Mammary epithelial cell (primary cell): ENCODE measurements at regions of chr6 and their contacts with region 1.

Region 1: DNA sequence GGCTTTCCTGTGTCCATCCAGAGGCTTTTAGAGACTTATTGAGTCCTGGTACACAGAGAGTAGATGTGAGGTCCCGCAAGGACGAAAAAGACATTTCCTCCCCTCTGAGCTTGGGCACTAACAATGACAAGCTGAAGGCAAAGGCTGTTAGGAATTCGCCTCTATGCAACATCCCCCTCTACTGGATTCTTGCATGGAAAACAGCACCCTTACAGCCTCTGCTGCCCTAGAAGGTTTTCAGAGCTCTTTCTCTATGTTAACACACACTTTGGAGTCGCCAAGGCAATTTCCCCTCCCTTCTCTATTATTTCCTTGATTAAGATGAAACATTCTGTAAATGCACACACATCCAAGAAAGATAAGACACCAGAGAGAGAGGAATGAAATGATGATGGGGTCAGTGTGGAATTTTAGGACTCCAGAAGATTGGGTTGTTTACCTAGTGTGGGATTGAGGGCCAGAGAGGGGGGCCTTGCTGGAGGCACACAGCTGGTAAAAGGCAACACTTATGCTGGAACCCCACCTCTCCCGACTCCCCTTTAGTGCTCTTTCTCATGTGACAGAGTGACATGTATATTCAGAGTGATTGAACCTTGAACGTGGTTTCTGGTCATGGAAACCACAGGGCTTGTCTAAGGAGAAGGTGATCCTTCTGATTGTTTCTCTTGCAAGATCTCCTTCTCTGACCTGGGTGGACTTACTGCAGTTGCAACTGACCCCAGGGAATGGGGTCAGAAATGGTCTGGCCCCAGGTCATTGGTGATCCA is 300.7 kb downstream of the CLIC5 start:
- DNase-seq: peak; percentile 64
- H3K4me3 ChIP-seq: no peak overlapping the region
- H3K27ac ChIP-seq: no peak overlapping the region
- H3K4me1 ChIP-seq: no peaks in the 10 kb centered on the region
- H3K27me3 ChIP-seq: no peaks in the 10 kb centered on the region
- CTCF ChIP-seq: peak; percentile 88 to 94

Region 2: DNA sequence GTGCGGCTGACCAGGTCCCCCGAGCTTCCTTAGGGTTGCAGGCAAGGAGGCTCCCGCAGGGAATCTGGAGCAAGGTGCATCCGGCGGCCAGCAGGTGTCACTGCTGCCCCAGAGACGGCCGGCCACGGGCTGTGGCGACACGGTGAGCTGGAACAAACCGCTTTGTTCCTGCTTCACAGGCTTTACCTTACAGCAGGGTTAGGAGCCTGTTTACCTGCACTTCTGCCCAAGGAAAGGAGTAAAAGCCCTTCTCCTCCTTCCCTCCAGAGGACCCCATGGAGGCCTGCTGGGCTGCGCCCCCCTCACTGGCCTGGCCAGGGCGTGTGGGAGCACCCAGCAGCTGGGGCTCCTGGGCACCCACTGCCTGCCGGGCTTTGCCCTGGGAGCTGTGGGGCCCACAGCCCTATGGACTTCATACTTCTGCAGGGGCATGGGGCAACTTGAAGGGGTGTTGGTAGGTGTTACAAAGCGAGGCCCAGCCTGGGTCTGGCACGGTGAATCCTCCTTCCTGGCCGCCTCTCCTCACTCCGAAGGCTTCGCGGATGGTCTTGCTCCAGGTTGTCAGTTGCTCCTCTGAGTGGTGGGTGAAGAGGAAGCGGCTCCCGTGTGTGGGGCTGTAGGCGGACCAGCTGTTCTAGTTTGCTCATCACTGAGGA is 1239.0 kb before region 1 on chr6:
- CTCF ChIA-PET with region 1: interaction called, 6 read pairs
- dilution Hi-C with region 1: no loop called
- in situ Hi-C with region 1: no loop called
- intact Hi-C with region 1: loop called (anchors 5 kb)
- DNase-seq: peak; percentile 70
- H3K4me3 ChIP-seq: no peak overlapping the region
- H3K27ac ChIP-seq: no peak overlapping the region
- H3K4me1 ChIP-seq: peaks cover 15% of the 10 kb centered on the region
- H3K27me3 ChIP-seq: no peaks in the 10 kb centered on the region
- CTCF ChIP-seq: peak; percentile 89 to 97

Region 3: GRCh38 chr6:44655412-44656342 is 1059.2 kb before region 1 on chr6:
- CTCF ChIA-PET with region 1: interaction called, 10 read pairs
- dilution Hi-C with region 1: no loop called
- in situ Hi-C with region 1: loop called (anchors 10 kb)
- intact Hi-C with region 1: loop called (anchors 2 kb)
- DNase-seq: peak; percentile 22
- H3K4me3 ChIP-seq: no peak overlapping the region
- H3K27ac ChIP-seq: no peak overlapping the region
- H3K4me1 ChIP-seq: peaks cover 9% of the 10 kb centered on the region
- H3K27me3 ChIP-seq: no peaks in the 10 kb centered on the region
- CTCF ChIP-seq: peak; percentile 88 to 93

Region 4: DNA sequence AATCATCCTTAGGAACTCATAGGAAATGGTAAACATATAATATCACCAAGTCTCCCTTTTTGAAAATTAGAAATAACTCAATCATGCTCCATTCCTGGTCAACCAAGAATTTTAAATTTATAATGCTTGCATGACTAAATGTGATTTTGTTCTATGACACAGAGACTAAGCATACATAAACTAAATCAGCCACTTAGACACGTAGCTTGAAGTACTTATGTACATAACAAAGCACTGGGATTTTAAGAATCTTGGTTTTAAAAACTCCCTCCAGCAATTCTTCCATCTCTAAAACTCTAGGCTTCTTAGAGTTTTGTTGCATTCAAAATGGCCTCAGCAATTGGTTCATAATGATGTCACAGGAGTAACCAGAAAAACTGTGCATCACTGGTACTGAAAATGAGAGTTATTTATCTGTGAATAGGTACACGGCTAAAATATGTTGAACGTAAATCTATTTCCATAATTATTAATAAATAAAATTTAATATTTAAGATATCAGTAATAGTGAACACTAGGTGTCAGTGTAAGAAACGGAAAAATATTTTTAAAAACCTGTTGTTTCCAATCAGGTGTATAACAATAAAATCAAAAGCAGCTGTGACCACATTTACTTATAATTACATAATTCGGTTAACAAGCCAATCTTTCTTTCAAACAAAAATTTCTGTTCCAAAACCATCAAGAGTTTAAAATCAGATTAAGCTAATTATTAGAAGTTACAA is 628.4 kb before region 1 on chr6:
- CTCF ChIA-PET with region 1: no interaction called
- dilution Hi-C with region 1: no loop called
- in situ Hi-C with region 1: loop called in 1 of 2 experiments (anchors 25 kb)
- intact Hi-C with region 1: loop called (anchors 5 kb)
- DNase-seq: no peak
- H3K4me3 ChIP-seq: no peak overlapping the region
- H3K27ac ChIP-seq: no peak overlapping the region
- H3K4me1 ChIP-seq: no peaks in the 10 kb centered on the region
- H3K27me3 ChIP-seq: no peaks in the 10 kb centered on the region
- CTCF ChIP-seq: peak in 1 of 2 donors; percentile 6

Region 5: DNA sequence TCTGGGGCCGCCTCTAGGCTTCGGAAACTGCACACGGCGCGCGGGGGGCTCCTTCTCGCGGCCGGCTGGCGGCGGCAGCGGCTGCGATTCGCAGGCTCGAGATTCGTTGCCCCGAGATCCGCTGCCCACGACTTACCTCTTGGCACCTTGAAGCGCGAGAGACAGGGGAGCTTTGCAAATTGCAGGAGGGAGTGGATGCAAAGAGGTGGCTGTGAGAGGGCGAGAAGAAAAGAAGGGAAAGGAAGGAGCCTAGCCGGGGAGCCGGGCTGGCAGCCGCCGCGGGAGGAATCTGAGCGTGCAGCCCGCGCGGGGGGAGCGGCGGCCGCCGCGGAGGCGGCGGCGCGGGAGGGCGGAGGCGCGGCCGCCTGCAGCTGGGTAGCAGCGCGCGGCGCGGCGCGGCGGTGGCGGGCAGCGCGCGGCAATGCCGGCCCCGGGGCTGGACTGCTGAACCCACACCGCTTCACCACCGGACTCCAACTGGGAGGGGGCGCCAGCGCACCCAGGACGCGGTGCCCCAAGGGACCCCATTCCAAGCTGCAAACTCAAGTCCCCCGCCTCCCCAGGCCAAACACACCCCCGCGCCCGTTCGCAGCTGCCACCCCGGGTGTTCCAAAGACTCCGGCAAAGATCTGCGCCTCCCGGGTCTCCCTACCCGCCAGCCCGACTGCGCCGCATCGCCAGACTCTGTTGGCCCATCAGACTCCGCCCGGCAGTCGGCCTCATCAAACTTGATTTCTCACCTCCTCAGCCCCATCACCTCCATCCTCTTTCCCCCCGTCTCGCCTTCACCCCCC is 293.0 kb before region 1 on chr6:
- CTCF ChIA-PET with region 1: interaction called, 12 read pairs
- dilution Hi-C with region 1: no loop called
- in situ Hi-C with region 1: loop called (anchors 5 to 10 kb)
- intact Hi-C with region 1: loop called (anchors 1 kb)
- DNase-seq: peak; percentile 66
- H3K4me3 ChIP-seq: peak overlapping the region; percentile 68 to 91 (median 88)
- H3K27ac ChIP-seq: peak overlapping the region; percentile 36
- H3K4me1 ChIP-seq: peaks cover 27% of the 10 kb centered on the region
- H3K27me3 ChIP-seq: no peaks in the 10 kb centered on the region
- CTCF ChIP-seq: peak in 1 of 2 donors; percentile 52

Region 6: GRCh38 chr6:45555981-45556771 is 158.7 kb before region 1 on chr6:
- CTCF ChIA-PET with region 1: no interaction called
- dilution Hi-C with region 1: no loop called
- in situ Hi-C with region 1: no loop called
- intact Hi-C with region 1: loop called (anchors 5 kb)
- DNase-seq: no peak
- H3K4me3 ChIP-seq: peak overlapping the region in 1 of 3 experiments; percentile 8
- H3K27ac ChIP-seq: no peak overlapping the region
- H3K4me1 ChIP-seq: peaks cover 11% of the 10 kb centered on the region
- H3K27me3 ChIP-seq: no peaks in the 10 kb centered on the region
- CTCF ChIP-seq: no peak

Region 7: DNA sequence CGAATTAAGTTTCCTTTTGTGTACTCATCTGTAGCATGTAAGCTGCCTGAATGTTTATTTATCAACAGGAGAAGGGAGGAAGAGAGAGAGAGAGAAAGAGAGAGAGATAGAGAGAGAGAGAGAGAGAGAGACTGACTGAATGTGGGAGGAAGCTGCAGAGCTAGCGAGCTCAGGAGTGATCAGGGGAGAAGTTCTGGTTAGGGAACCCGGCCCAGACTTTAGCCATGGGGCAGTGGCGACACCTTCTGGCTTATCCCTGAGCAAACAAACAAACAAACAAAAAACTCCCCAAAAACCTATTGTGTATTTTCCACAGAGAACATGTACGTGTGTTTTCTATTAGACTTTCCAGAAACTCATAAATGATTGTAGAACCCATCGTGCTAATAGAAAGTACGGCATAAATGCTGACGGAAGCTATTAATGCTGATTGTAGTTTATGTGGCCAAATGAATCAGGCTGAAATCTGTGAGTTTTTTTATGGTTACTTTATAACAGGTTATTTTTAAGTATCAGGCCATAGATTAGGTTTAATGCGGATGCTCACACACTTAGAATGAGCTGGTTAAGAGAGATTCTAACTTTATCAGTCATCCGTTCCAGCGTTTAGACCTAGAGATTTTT is 207.9 kb after region 1 on chr6:
- CTCF ChIA-PET with region 1: interaction called, 8 read pairs
- dilution Hi-C with region 1: no loop called
- in situ Hi-C with region 1: no loop called
- intact Hi-C with region 1: loop called (anchors 1 kb)
- DNase-seq: peak; percentile 29
- H3K4me3 ChIP-seq: no peak overlapping the region
- H3K27ac ChIP-seq: no peak overlapping the region
- H3K4me1 ChIP-seq: no peaks in the 10 kb centered on the region
- H3K27me3 ChIP-seq: no peaks in the 10 kb centered on the region
- CTCF ChIP-seq: peak; percentile 53 to 90